MCF 10A (cell line): ENCODE measurements at regions of chr14 and their contacts with region 1.

Region 1: GRCh38 chr14:59360923-59361794 is 104.0 kb downstream of the GPR135 start:
- DNase-seq: peak; percentile 92
- H3K4me3 Mint-ChIP-seq: peak overlapping the region; percentile 50
- H3K27ac Mint-ChIP-seq: peak overlapping the region; percentile 84
- H3K4me1 Mint-ChIP-seq: peaks cover 79% of the 10 kb centered on the region
- H3K27me3 Mint-ChIP-seq: no peaks in the 10 kb centered on the region
- CTCF ChIP-seq: no peak

Region 2: GRCh38 chr14:59262717-59263454 is 98.3 kb before region 1 on chr14:
- CTCF ChIA-PET with region 1: no interaction called
- POLR2A ChIA-PET with region 1: no interaction called
- intact Hi-C with region 1: no loop called
- DNase-seq: no peak
- H3K4me3 Mint-ChIP-seq: no peak overlapping the region
- H3K27ac Mint-ChIP-seq: no peak overlapping the region
- H3K4me1 Mint-ChIP-seq: peaks cover 6% of the 10 kb centered on the region
- H3K27me3 Mint-ChIP-seq: no peaks in the 10 kb centered on the region
- CTCF ChIP-seq: no peak

Region 3: DNA sequence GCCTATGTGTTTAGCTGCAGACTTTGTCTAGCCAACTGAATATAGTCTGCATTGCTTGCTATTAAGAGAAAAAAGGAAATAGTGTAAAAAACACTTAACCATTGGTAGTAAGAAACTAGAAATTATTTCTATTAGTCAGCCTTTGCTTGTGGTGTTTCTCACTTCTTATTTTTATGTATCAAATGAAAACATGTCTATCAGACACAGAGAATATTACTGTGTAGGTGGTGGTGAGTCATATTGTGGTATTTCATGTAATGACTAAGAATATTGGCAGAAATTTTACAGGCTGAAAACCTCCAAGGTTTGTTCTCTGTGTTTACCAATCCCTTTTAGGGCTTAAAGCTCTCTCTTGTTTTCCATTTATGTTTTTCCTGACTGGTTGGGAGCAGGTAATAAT is 85.5 kb before region 1 on chr14:
- CTCF ChIA-PET with region 1: interaction called, 3 read pairs
- POLR2A ChIA-PET with region 1: interaction called, 15 read pairs
- intact Hi-C with region 1: no loop called
- DNase-seq: peak; percentile 87
- H3K4me3 Mint-ChIP-seq: peak overlapping the region; percentile 33
- H3K27ac Mint-ChIP-seq: peak overlapping the region; percentile 81
- H3K4me1 Mint-ChIP-seq: peaks cover 39% of the 10 kb centered on the region
- H3K27me3 Mint-ChIP-seq: no peaks in the 10 kb centered on the region
- CTCF ChIP-seq: no peak

Region 4: DNA sequence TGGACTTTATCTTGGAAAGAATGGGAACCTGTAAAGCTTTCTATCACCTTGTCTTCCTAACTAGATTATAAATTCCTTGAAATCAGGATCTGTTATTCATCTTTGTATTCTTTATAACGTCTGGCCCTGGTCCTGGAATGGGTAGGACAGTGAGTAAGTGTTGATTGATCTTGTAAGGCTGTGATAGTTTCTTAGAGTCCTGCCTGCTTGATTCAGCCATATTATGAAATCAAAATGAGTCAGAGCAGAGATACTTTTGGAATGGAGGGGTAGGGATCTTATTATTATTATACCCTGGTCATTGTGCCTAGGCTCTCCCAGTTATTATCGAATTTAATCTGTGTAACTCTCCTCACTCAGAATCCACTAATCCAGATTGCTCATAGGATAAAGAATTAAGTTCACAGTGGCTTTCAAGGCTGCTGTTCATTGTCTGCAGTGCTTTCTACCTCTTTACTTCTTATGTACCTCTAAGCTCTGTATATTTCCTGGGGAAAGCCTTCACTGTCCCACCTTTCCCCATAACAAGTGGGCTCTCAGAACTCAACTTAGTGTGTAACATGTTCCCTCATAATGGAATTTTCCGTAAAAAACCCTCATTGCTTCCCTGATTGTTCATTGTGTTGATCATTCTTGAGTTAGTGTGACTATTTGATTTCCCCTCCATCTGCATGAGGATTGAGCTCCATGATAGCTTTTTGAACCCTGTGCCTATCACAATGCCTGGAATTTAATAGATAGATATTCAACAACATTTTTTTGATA is 79.4 kb before region 1 on chr14:
- CTCF ChIA-PET with region 1: interaction called, 3 read pairs
- POLR2A ChIA-PET with region 1: interaction called, 15 read pairs
- intact Hi-C with region 1: loop called (anchors 2 kb)
- DNase-seq: peak; percentile 80
- H3K4me3 Mint-ChIP-seq: peak overlapping the region; percentile 43
- H3K27ac Mint-ChIP-seq: peak overlapping the region; percentile 61
- H3K4me1 Mint-ChIP-seq: peaks cover 46% of the 10 kb centered on the region
- H3K27me3 Mint-ChIP-seq: no peaks in the 10 kb centered on the region
- CTCF ChIP-seq: no peak

Region 5: GRCh38 chr14:59320763-59321640 is 40.2 kb before region 1 on chr14:
- CTCF ChIA-PET with region 1: no interaction called
- POLR2A ChIA-PET with region 1: interaction called, 4 read pairs
- intact Hi-C with region 1: loop called (anchors 5 kb)
- DNase-seq: peak; percentile 32
- H3K4me3 Mint-ChIP-seq: peak overlapping the region; percentile 30
- H3K27ac Mint-ChIP-seq: peak overlapping the region; percentile 56
- H3K4me1 Mint-ChIP-seq: peaks cover 15% of the 10 kb centered on the region
- H3K27me3 Mint-ChIP-seq: no peaks in the 10 kb centered on the region
- CTCF ChIP-seq: no peak

Region 6: DNA sequence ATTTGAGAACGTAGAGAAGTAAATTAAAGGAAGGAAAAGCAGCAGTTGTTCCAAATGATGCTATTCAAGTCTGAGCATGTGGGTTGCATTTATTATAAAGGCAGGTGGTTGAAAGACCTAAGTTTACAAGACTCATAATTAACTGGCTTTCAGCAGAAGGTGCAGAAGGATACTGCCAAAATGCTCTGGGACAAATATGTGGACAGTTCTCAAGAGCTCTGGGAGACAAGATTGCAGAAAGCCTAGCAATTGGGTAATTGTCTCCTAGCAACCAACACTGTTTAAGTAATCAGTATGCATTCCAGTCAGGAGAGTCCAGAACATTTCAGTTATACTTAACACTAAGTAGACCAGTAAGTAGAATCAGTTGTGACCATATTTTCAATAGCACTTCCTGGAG is 27.5 kb before region 1 on chr14:
- CTCF ChIA-PET with region 1: interaction called, 5 read pairs
- POLR2A ChIA-PET with region 1: interaction called, 90 read pairs
- intact Hi-C with region 1: no loop called
- DNase-seq: peak; percentile 88
- H3K4me3 Mint-ChIP-seq: no peak overlapping the region
- H3K27ac Mint-ChIP-seq: peak overlapping the region; percentile 82
- H3K4me1 Mint-ChIP-seq: peaks cover 46% of the 10 kb centered on the region
- H3K27me3 Mint-ChIP-seq: no peaks in the 10 kb centered on the region
- CTCF ChIP-seq: no peak

Region 7: GRCh38 chr14:59407246-59408010 is 46.3 kb after region 1 on chr14:
- CTCF ChIA-PET with region 1: no interaction called
- POLR2A ChIA-PET with region 1: interaction called, 16 read pairs
- intact Hi-C with region 1: loop called (anchors 5 kb)
- DNase-seq: peak; percentile 68
- H3K4me3 Mint-ChIP-seq: peak overlapping the region; percentile 34
- H3K27ac Mint-ChIP-seq: peak overlapping the region; percentile 81
- H3K4me1 Mint-ChIP-seq: peaks cover 10% of the 10 kb centered on the region
- H3K27me3 Mint-ChIP-seq: no peaks in the 10 kb centered on the region
- CTCF ChIP-seq: no peak

Region 8: DNA sequence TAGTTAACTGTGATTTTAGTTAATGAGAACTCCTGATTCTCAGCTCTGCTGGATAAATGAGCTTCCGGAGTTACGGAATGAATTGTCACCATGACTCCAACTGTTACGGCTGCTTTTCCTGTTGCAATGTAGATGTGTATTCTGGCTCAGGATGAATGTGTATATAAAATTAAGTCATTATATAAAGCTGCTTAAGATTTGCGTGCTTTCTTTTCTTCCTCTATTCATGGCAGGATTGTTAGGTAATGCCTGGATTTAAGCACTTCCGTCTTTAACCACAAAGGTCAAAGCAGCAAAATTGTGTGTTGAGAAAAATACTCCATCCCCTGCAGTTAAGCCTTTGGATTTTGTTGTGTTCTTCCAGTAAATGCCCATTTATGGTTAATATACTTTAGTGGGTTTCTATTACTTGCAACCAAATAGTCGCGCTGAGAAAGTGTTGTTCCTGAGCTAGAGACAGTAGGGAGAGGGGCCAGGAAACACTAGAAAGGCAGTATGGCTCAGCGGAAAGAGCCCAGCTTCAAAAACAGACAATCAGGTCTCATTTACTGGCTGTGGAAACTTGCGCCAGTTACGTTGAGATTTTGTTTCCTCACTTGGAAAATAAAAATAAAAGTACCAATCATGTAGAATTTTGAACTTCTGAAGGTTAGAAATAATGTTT is 224.9 kb after region 1 on chr14:
- CTCF ChIA-PET with region 1: no interaction called
- POLR2A ChIA-PET with region 1: no interaction called
- intact Hi-C with region 1: no loop called
- DNase-seq: no peak
- H3K4me3 Mint-ChIP-seq: no peak overlapping the region
- H3K27ac Mint-ChIP-seq: no peak overlapping the region
- H3K4me1 Mint-ChIP-seq: peaks cover 5% of the 10 kb centered on the region
- H3K27me3 Mint-ChIP-seq: no peaks in the 10 kb centered on the region
- CTCF ChIP-seq: no peak